Activated CD4-positive, alpha-beta T cell treated with anti-CD3 and anti-CD28 coated beads, Interleukin-2, amount 10 ng/mL, durations not matched to agents 24 days and 14 days (primary cell): ENCODE measurements at regions of chr5 and their contacts with region 1.

Region 1: GRCh38 chr5:71586941-71587765 is at the start of gene MCCC2:
- DNase-seq: peak; percentile 99
- H3K4me3 Mint-ChIP-seq: peak within 1 kb of the TSS; percentile 89
- H3K27ac Mint-ChIP-seq: peak within 1 kb of the TSS; percentile 99
- H3K4me1 Mint-ChIP-seq: peaks cover 31% of the 10 kb centered on the region
- H3K27me3 Mint-ChIP-seq: no peaks in the 10 kb centered on the region
- total RNA-seq, gene MCCC2: 58.7 and 58.9 TPM in 2 replicates

Region 2: GRCh38 chr5:71455427-71456361 is 131.5 kb before region 1 on chr5 and contains the start of gene BDP1:
- intact Hi-C with region 1: loop called (anchors 1 kb)
- DNase-seq: peak; percentile 99
- H3K4me3 Mint-ChIP-seq: peak within 1 kb of the TSS; percentile 97
- H3K27ac Mint-ChIP-seq: peak within 1 kb of the TSS; percentile 99
- H3K4me1 Mint-ChIP-seq: peaks cover 23% of the 10 kb centered on the region
- H3K27me3 Mint-ChIP-seq: peaks cover 2% of the 10 kb centered on the region
- total RNA-seq, gene BDP1: 39.1 and 39.4 TPM in 2 replicates

Region 3: DNA sequence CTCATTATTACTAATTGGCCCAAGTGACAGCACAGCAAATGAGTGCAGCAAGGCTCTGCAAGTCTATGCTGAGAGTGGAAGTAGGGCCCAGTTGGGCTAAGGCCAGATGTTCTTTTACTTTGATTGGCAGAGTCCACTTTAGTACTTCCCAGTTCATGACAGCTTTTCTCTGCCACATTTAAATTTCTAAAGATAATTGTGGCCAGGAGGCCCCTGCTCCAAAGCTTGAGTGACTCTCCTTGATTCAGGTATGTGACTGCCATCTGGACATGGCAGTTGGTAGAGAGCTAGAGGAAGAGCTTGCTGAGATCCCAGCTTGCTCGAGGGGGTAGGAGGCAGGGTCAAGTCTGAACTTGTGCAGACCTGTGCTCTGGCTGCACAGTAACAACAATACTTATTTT is 286.0 kb after region 1 on chr5:
- intact Hi-C with region 1: no loop called
- DNase-seq: peak; percentile 40
- H3K4me3 Mint-ChIP-seq: no peak overlapping the region
- H3K27ac Mint-ChIP-seq: no peak overlapping the region
- H3K4me1 Mint-ChIP-seq: no peaks in the 10 kb centered on the region
- H3K27me3 Mint-ChIP-seq: peaks cover 18% of the 10 kb centered on the region